ENCODE measurements at regions of chr5 and their contacts with region 1.

Region 1: DNA sequence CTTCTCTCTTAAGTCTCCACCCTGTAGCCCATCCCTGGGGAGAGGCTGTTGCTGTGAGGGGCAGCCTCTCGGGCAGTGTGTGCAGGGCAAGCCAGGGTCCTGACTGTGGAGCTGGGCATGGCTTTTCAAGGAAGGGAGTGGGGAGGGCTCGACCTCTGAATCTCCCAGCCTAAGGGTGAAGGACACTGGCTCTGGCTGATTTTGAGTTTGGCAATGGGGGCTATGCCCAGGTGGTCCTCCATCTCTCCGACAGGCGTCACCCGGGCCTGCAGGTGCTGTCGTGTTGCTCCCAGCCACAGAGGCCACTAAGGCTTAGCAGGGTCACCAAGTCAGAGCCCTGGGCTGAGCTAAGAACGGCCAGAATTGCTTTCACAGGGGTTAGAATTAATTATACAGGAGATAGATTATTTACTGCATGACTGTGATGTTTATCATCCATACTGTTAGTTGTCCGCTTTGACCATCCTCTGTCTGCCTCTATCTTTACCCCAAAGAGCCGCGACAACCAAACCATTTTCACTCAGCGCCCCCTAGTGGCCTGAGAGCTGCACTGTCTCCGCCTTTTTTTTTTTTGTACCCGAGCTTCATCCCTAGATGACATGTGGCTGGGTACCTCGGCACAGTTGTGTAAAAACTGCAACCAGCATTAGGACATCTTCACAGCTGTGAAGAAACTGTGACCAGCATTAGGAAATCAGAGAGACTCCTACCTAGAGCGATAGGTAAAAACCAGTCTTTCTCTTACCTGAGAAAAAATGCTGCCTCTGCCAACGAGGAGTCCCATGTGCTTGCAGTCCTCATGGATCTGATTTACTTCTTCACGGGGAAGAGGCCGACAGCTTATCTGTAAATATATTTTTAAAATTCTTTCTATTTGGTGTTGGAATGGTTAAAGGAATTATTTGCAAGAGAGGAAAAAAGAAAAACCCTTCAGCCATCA is 44.5 kb downstream of the AGXT2 start:
- DNase-seq: peak in 1 of 2 donors; percentile 24
- H3K4me3 ChIP-seq: no peak overlapping the region
- H3K27ac ChIP-seq: no peak overlapping the region
- H3K4me1 ChIP-seq: no peaks in the 10 kb centered on the region
- H3K27me3 ChIP-seq: peaks cover 0 to 20% of the 10 kb centered on the region in 2 donors
- CTCF ChIP-seq: peak; percentile 52 to 76

Region 2: DNA sequence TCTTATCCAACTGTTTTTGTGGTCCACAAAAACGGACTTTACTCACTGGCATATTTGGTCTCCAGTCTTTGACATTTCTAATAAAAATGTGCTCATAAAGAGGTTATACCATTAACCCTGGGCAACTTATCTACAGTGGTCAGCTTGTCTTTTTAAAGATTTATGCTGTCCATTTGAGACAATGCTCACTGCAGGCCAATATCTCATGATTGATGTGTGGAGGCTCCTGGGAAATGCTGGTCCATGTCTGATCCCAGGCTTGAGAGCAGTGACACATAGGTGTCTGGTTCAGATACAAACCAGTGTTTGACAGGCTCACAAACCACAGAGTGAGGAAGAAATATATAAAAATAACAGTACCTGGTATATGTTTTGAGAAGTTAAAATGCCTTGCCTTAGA is 1381.8 kb before region 1 on chr5:
- intact Hi-C with region 1: no loop called
- DNase-seq: no peak
- H3K4me3 ChIP-seq: no peak overlapping the region
- H3K27ac ChIP-seq: no peak overlapping the region
- H3K4me1 ChIP-seq: no peaks in the 10 kb centered on the region
- H3K27me3 ChIP-seq: no peaks in the 10 kb centered on the region
- CTCF ChIP-seq: no peak

Region 3: DNA sequence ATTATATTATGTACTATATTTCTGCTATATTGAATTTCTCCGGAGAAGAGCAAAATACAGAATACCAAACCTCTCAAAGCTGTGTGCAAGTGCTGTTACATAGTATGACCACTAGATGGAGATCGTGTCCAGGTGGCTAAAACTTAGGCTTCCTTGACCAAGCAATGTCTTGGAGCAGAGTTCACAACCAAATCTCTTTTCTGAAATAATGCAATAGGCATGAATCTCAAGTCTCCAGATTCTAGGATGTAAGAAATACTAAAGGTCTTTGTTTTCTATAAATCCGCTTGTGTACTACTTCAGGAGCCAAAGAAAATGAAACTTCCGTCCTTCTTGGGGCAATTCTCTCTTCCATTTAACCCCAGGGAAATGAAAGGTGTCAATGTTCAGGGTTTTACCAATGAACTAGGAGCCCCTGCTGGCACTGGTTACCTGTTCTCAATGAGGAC is 528.7 kb before region 1 on chr5:
- intact Hi-C with region 1: loop called (anchors 2 kb)
- DNase-seq: no peak
- H3K4me3 ChIP-seq: no peak overlapping the region
- H3K27ac ChIP-seq: no peak overlapping the region
- H3K4me1 ChIP-seq: peaks cover 0 to 4% (median 1%) of the 10 kb centered on the region in 4 donors
- H3K27me3 ChIP-seq: peaks cover 0 to 2% of the 10 kb centered on the region in 2 donors
- CTCF ChIP-seq: peak; percentile 94 to 98